ENCODE measurements at regions of chr1 and their contacts with region 1.

Region 1: DNA sequence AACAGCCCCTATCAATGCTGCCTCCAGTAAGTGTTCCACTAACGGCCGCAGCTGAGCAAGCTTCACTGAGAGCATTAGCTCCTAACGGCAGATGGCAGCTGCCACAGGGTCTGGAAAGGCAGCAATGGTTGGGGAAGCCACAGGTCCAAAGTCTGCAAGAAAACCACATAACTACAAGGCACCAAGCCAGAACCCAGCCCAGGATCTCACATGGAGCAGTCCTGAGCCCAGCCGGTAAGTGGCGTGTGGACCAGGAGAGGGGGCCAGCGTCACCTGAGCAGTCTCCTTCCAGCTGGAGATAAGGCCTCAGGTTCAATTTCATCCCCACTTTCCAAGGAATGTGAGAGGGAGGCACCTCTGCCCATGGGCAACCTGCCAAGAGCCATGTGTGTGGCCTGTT is 13.2 kb downstream of the SYT2 start:
- DNase-seq: no peak
- H3K4me3 ChIP-seq: no peak overlapping the region
- H3K27ac ChIP-seq: no peak overlapping the region
- H3K4me1 ChIP-seq: no peaks in the 10 kb centered on the region
- H3K27me3 ChIP-seq: peaks cover under 1% of the 10 kb centered on the region
- CTCF ChIP-seq: no peak

Region 2: GRCh38 chr1:202649553-202650392 is 47.3 kb before region 1 on chr1:
- CTCF ChIA-PET with region 1: no interaction called
- dilution Hi-C with region 1: loop called (anchors 5 kb)
- in situ Hi-C with region 1: no loop called
- intact Hi-C with region 1: no loop called
- DNase-seq: no peak
- H3K4me3 ChIP-seq: no peak overlapping the region
- H3K27ac ChIP-seq: no peak overlapping the region
- H3K4me1 ChIP-seq: no peaks in the 10 kb centered on the region
- H3K27me3 ChIP-seq: peaks cover 7% of the 10 kb centered on the region
- CTCF ChIP-seq: no peak

Region 3: GRCh38 chr1:202680586-202681352 is 16.3 kb before region 1 on chr1:
- CTCF ChIA-PET with region 1: no interaction called
- dilution Hi-C with region 1: no loop called
- in situ Hi-C with region 1: no loop called
- intact Hi-C with region 1: no loop called
- DNase-seq: no peak
- H3K4me3 ChIP-seq: no peak overlapping the region
- H3K27ac ChIP-seq: no peak overlapping the region
- H3K4me1 ChIP-seq: no peaks in the 10 kb centered on the region
- H3K27me3 ChIP-seq: no peaks in the 10 kb centered on the region
- CTCF ChIP-seq: no peak